MCF 10A (cell line): ENCODE measurements at regions of chr4 and their contacts with region 1.

Region 1: GRCh38 chr4:139295206-139295941 is 5.9 kb upstream of the NAA15 start:
- DNase-seq: peak; percentile 92
- H3K4me3 Mint-ChIP-seq: peak overlapping the region; percentile 78
- H3K27ac Mint-ChIP-seq: peak overlapping the region; percentile 97
- H3K4me1 Mint-ChIP-seq: peaks cover 2% of the 10 kb centered on the region
- H3K27me3 Mint-ChIP-seq: no peaks in the 10 kb centered on the region
- CTCF ChIP-seq: peak; percentile 93

Region 2: GRCh38 chr4:138804711-138805110 is 490.7 kb before region 1 on chr4:
- CTCF ChIA-PET with region 1: no interaction called
- POLR2A ChIA-PET with region 1: no interaction called
- intact Hi-C with region 1: no loop called
- DNase-seq: no peak
- H3K4me3 Mint-ChIP-seq: no peak overlapping the region
- H3K27ac Mint-ChIP-seq: no peak overlapping the region
- H3K4me1 Mint-ChIP-seq: no peaks in the 10 kb centered on the region
- H3K27me3 Mint-ChIP-seq: peaks cover 69% of the 10 kb centered on the region
- CTCF ChIP-seq: no peak

Region 3: DNA sequence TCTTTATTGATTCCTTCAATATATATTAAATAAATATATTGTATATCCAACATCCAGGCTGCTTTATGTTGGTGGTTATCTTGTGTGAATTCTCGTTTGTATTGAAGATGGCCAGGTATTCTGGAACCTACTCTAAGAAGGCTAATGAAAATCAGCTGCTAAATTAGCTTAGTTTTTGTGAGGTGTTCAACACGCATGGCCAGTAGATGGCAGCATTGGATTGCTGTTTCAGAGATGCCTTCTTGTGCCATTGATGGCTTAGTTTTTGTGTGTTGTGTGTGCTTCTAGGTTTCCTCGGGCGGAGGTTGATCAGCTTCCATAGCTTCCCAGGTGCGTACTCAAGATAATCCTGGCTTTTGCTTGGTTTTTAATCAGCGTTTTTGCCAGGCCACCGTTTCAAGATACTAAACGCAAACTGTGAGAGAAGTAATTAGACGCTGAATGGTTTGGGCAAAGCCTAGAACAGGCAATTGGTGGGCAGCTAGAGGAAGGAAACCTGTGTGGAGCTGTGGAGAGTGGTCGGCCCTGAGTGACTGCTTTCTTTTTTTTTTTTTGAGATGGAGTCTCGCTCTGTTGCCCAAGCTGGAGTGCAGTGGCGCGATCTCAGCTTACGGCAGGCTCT is 264.6 kb before region 1 on chr4:
- CTCF ChIA-PET with region 1: interaction called, 8 read pairs
- POLR2A ChIA-PET with region 1: interaction called, 8 read pairs
- intact Hi-C with region 1: loop called (anchors 5 kb)
- DNase-seq: peak; percentile 85
- H3K4me3 Mint-ChIP-seq: no peak overlapping the region
- H3K27ac Mint-ChIP-seq: no peak overlapping the region
- H3K4me1 Mint-ChIP-seq: peaks cover 11% of the 10 kb centered on the region
- H3K27me3 Mint-ChIP-seq: no peaks in the 10 kb centered on the region
- CTCF ChIP-seq: peak; percentile 70

Region 4: GRCh38 chr4:139054791-139055376 is 240.5 kb before region 1 on chr4:
- CTCF ChIA-PET with region 1: no interaction called
- POLR2A ChIA-PET with region 1: no interaction called
- intact Hi-C with region 1: no loop called
- DNase-seq: no peak
- H3K4me3 Mint-ChIP-seq: no peak overlapping the region
- H3K27ac Mint-ChIP-seq: peak overlapping the region; percentile 14
- H3K4me1 Mint-ChIP-seq: peaks cover 19% of the 10 kb centered on the region
- H3K27me3 Mint-ChIP-seq: no peaks in the 10 kb centered on the region
- CTCF ChIP-seq: no peak

Region 5: DNA sequence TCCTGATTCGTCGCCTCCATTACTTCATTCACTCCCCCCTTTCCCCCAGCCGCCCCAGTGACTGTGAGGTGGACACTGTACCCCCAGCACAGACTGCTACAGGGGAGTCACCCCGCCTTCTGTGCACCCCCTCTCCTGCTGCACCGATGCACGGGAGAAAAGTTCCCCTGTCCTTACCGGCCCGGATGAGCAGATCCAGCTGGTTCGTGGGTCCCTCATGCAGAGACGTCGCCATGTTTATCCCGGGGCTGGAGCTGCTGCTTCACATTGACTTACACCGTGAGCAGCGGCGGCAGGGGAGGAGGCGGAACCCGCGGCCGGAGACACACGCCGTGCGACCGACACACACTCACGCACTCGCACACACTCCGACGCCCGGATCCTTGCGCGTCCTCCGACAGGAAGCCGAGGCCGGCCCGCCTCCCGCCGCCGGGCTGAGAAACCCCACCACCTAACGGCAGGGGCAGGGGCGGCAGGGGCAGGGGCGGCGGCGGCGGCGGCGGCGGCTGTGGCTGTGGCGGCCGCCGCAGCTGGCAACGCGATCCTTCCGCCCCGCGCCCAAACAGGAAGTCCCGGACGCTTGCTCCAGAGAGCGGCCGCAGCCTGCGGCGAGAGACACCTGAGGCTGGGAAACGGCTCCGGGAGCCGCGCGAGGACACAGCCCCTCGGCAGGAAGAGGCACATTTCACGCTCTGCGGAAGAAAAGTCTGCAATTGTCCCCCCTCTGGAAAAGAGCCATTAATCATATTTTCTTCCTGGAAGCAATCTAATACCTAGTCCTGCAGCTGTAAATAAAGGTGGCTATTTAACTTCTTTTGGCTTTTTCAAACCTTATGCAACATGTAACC is 211.2 kb before region 1 on chr4:
- CTCF ChIA-PET with region 1: interaction called, 3 read pairs
- POLR2A ChIA-PET with region 1: interaction called, 92 read pairs
- intact Hi-C with region 1: loop called (anchors 5 kb)
- DNase-seq: peak; percentile 91
- H3K4me3 Mint-ChIP-seq: peak overlapping the region; percentile 97
- H3K27ac Mint-ChIP-seq: peak overlapping the region; percentile 95
- H3K4me1 Mint-ChIP-seq: peaks cover 15% of the 10 kb centered on the region
- H3K27me3 Mint-ChIP-seq: no peaks in the 10 kb centered on the region
- CTCF ChIP-seq: no peak

Region 6: DNA sequence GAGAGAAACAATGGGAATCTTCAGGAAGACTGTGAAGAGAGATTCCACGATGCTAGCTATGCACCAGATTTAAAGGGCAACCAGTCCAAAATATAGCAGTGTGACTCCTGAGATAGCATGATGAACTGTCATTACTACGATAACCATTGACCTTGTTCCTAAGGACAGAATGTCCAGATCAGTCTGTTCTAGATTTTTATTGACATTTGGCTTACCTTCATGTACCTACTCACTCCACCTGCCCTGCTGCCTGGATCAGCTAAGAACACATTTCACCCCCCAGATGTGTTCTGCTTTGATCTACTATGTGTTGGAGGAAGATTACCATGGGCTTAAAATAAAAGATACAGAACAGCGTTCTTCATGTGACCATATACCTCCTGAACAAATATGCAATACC is 168.5 kb before region 1 on chr4:
- CTCF ChIA-PET with region 1: no interaction called
- POLR2A ChIA-PET with region 1: no interaction called
- intact Hi-C with region 1: no loop called
- DNase-seq: no peak
- H3K4me3 Mint-ChIP-seq: no peak overlapping the region
- H3K27ac Mint-ChIP-seq: no peak overlapping the region
- H3K4me1 Mint-ChIP-seq: no peaks in the 10 kb centered on the region
- H3K27me3 Mint-ChIP-seq: no peaks in the 10 kb centered on the region
- CTCF ChIP-seq: no peak

Region 7: DNA sequence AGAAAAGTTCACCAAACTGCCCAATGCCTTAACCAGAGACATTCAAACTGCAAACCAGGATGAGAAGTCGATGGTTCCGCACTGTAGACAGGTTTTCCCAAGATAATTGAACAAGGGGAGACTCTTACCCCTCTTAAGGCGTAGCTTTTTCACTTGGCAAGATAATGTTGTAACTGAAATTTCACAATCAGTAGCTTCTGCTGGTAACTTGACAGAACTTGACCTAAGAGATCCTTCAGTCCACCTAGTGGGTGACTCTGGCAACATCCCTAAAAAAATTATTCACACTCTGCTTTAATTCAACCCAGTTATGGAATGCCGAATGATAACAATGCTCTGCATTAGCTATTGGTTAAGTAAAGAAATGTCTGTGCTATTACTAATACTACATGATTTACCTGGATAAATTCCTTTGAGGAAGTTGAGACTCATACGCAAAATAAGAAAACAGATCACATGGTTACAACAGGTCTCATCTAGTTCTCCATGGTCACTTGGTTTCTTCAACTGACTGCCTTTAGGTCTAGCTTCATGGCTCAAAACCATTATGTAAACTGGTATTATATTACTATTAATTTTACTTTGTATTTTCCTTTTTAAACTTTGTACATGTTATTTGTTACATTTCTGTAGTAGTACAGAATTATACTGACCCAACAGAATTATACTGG is 127.5 kb before region 1 on chr4:
- CTCF ChIA-PET with region 1: interaction called, 16 read pairs
- POLR2A ChIA-PET with region 1: interaction called, 38 read pairs
- intact Hi-C with region 1: no loop called
- DNase-seq: peak; percentile 87
- H3K4me3 Mint-ChIP-seq: no peak overlapping the region
- H3K27ac Mint-ChIP-seq: peak overlapping the region; percentile 27
- H3K4me1 Mint-ChIP-seq: peaks cover 30% of the 10 kb centered on the region
- H3K27me3 Mint-ChIP-seq: no peaks in the 10 kb centered on the region
- CTCF ChIP-seq: peak; percentile 57

Region 8: DNA sequence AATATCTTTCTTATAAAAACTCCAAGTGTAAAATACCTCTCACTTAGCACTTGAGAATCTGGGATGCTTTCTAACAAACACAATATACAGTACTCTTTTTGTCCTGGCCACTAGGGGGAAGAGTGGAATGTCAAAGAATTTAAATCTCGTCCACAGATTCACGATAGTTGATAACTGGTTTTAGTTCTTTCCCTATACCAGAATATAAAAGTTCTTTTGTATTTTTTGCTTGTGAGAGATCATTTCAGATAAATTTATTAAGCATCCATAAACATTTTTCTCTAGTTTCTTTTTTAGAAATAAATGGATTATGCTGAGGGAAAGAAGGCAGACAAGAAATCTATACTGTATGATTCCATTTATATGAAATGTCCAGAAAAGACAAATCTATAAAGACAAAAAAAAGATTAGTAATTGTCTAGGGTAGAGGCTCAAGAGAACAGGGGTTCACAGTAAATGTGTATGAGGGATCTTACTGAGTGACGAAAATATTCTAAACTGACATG is 65.8 kb before region 1 on chr4:
- CTCF ChIA-PET with region 1: interaction called, 57 read pairs
- POLR2A ChIA-PET with region 1: interaction called, 19 read pairs
- intact Hi-C with region 1: loop called (anchors 1 kb)
- DNase-seq: peak; percentile 72
- H3K4me3 Mint-ChIP-seq: no peak overlapping the region
- H3K27ac Mint-ChIP-seq: no peak overlapping the region
- H3K4me1 Mint-ChIP-seq: no peaks in the 10 kb centered on the region
- H3K27me3 Mint-ChIP-seq: no peaks in the 10 kb centered on the region
- CTCF ChIP-seq: peak; percentile 62

Region 9: DNA sequence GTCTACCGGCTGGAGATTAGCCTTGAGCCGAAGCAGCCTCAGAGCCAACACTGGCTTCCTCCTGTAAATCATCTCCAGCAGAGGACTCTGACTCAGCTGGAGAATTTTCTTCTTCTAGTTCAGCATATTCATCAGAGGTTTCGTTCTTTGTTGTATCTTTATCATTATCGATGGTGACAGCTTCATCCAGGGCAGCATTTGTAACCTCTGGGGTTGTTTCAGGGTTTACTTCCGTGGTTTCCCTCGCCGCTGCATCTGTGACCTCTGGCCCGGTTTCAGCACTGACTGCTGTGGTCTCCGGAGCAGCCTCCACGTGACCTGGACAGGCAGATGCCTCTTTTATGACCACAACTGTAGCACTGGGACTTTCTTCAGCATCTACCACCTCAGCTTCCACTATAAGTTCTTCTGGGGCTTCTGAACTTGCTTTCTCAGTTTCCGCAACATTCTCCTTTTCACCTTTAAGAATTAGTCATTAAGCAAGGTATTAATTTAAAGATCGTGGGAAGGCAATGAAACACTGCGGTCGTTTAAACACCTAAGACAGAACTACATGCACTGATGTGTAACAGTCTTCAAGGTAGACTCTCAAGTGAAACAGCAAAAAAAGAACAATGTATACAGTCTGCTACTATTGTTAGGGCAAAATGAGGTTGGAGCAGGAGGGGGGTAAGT is 28.7 kb before region 1 on chr4:
- CTCF ChIA-PET with region 1: interaction called, 4 read pairs
- POLR2A ChIA-PET with region 1: interaction called, 16 read pairs
- intact Hi-C with region 1: no loop called
- DNase-seq: peak; percentile 53
- H3K4me3 Mint-ChIP-seq: peak overlapping the region; percentile 71
- H3K27ac Mint-ChIP-seq: peak overlapping the region; percentile 61
- H3K4me1 Mint-ChIP-seq: peaks cover 14% of the 10 kb centered on the region
- H3K27me3 Mint-ChIP-seq: no peaks in the 10 kb centered on the region
- CTCF ChIP-seq: no peak

Region 10: DNA sequence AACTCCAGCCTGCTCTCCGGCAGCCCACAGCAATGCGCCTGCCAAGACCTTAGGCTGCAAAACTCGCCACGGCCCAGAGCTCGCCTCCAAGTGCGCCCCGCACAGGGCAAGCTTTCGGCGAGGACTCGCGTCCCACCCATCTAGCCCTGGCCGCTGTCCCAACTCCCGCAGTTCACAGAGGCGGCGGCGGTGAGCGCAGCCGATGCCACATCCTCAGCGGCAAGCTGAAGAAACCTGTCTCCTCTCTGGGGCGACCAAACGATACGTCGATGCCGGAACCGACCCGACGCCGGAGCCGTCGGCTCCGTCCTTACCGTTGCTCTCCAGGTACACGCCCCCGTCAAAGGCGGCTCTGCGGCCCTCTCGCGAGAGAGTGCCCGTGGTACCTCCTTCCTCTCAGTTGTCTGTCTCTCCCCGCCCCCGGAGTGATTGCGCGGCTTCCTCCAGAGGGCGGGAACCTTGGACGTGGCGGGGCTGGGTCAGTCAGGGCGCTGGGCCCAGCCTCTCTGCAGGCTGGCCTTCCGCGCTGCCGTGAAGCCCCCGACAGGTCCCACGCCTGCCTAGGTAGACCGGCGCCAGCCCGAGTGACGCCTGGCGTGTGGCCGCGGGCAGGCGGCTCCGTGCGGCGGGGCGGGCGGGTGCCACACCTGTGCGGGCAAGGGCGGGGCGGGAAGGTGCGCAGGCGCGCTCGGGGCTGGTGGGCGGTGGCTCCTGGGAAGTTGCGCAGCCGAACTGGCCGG is 158.2 kb after region 1 on chr4:
- CTCF ChIA-PET with region 1: interaction called, 3 read pairs
- POLR2A ChIA-PET with region 1: interaction called, 13 read pairs
- intact Hi-C with region 1: loop called (anchors 5 kb)
- DNase-seq: peak; percentile 98
- H3K4me3 Mint-ChIP-seq: peak overlapping the region; percentile 100
- H3K27ac Mint-ChIP-seq: peak overlapping the region; percentile 97
- H3K4me1 Mint-ChIP-seq: peaks cover 45% of the 10 kb centered on the region
- H3K27me3 Mint-ChIP-seq: no peaks in the 10 kb centered on the region
- CTCF ChIP-seq: no peak